MCF 10A (cell line): ENCODE measurements at regions of chr6 and their contacts with region 1.

Region 1: DNA sequence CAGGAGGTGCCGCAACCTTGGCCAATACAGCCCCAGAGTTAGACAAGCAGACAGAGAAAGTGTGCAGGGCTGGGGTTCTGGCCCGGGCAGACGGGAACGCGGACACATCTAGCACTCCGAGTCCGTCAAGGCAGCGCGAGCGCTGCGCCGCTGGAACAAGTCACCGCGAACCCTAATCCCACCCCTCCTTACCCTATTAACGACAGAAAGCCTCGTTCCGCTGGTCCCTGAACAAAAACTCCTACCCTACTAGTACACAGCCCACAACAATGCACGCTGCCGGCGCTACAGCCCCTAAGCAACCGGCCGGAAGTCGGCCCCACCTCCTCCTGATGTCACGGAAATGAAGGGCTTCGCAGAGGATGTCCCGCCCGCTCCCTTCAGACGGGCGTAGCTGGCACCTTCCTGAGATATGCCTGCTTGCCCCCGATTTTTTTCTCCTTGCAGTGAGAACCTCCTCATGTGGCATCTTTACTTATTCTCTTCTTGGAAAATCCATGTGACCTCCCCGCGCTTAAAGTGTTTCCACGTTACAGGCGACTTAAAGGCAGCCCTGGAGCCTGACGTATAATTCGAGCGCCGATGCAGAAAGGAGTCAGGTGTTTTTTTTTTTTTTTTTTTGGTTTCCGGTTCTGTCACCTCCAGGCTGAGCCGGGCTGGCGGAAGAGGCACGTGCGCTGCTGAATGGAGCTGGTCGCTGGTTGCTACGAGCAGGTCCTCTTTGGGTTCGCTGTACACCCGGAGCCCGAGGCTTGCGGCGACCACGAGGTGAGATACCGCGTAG is at the starts of genes C6orf52 and PAK1IP1:
- DNase-seq: peak; percentile 93
- H3K4me3 Mint-ChIP-seq: peak within 1 kb of the TSS; percentile 91
- H3K27ac Mint-ChIP-seq: peak within 1 kb of the TSS; percentile 100
- H3K4me1 Mint-ChIP-seq: peaks cover 5% of the 10 kb centered on the region
- H3K27me3 Mint-ChIP-seq: no peaks in the 10 kb centered on the region
- CTCF ChIP-seq: no peak
- total RNA-seq, gene C6orf52: 5.0 and 6.5 TPM in 2 replicates
- total RNA-seq, gene PAK1IP1: 27.0 and 38.1 TPM in 2 replicates

Region 2: GRCh38 chr6:10510592-10511367 is 183.7 kb before region 1 on chr6:
- CTCF ChIA-PET with region 1: interaction called, 7 read pairs
- POLR2A ChIA-PET with region 1: interaction called, 10 read pairs
- intact Hi-C with region 1: loop called (anchors 1 kb)
- DNase-seq: peak; percentile 67
- H3K4me3 Mint-ChIP-seq: no peak overlapping the region
- H3K27ac Mint-ChIP-seq: no peak overlapping the region
- H3K4me1 Mint-ChIP-seq: peaks cover 6% of the 10 kb centered on the region
- H3K27me3 Mint-ChIP-seq: no peaks in the 10 kb centered on the region
- CTCF ChIP-seq: peak; percentile 71

Region 3: GRCh38 chr6:10733151-10733715 is 38.7 kb after region 1 on chr6:
- CTCF ChIA-PET with region 1: interaction called, 6 read pairs
- POLR2A ChIA-PET with region 1: interaction called, 10 read pairs
- intact Hi-C with region 1: no loop called
- DNase-seq: no peak
- H3K4me3 Mint-ChIP-seq: no peak overlapping the region
- H3K27ac Mint-ChIP-seq: peak overlapping the region; percentile 88
- H3K4me1 Mint-ChIP-seq: peaks cover 7% of the 10 kb centered on the region
- H3K27me3 Mint-ChIP-seq: no peaks in the 10 kb centered on the region
- CTCF ChIP-seq: no peak

Region 4: DNA sequence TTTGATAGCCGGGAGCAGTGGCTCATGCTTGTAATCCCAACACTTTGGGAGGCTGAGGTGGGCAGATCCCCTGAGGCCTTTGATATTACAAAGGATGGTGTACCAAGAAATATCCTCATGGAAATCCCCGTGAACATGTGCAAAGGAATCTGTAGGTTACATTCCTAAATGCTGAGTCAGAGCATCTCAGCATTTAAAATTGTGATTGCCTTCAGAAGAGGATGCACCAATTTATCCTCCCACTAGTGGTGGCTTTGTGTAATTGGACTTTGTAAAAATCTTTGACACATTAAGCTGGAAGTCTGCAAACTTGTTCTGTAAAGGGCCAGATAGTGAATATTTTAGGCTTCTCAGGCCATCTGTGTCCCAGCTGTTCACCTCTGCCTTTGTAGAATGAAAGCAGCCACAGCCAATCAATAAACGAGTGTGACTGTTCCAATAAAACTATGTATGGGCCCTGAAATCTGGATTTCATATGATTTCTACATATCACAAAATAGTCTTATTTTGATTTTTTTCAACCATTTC is 64.9 kb after region 1 on chr6:
- CTCF ChIA-PET with region 1: no interaction called
- POLR2A ChIA-PET with region 1: interaction called, 13 read pairs
- intact Hi-C with region 1: loop called (anchors 1 kb)
- DNase-seq: peak; percentile 92
- H3K4me3 Mint-ChIP-seq: no peak overlapping the region
- H3K27ac Mint-ChIP-seq: peak overlapping the region; percentile 86
- H3K4me1 Mint-ChIP-seq: peaks cover 20% of the 10 kb centered on the region
- H3K27me3 Mint-ChIP-seq: no peaks in the 10 kb centered on the region
- CTCF ChIP-seq: peak; percentile 51

Region 5: GRCh38 chr6:11810039-11810541 is 1115.6 kb after region 1 on chr6:
- CTCF ChIA-PET with region 1: no interaction called
- POLR2A ChIA-PET with region 1: no interaction called
- intact Hi-C with region 1: no loop called
- DNase-seq: peak; percentile 98
- H3K4me3 Mint-ChIP-seq: peak overlapping the region; percentile 28
- H3K27ac Mint-ChIP-seq: peak overlapping the region; percentile 86
- H3K4me1 Mint-ChIP-seq: peaks cover 43% of the 10 kb centered on the region
- H3K27me3 Mint-ChIP-seq: no peaks in the 10 kb centered on the region
- CTCF ChIP-seq: no peak